ENCODE measurements at regions of chr19 and their contacts with region 1.

Region 1: DNA sequence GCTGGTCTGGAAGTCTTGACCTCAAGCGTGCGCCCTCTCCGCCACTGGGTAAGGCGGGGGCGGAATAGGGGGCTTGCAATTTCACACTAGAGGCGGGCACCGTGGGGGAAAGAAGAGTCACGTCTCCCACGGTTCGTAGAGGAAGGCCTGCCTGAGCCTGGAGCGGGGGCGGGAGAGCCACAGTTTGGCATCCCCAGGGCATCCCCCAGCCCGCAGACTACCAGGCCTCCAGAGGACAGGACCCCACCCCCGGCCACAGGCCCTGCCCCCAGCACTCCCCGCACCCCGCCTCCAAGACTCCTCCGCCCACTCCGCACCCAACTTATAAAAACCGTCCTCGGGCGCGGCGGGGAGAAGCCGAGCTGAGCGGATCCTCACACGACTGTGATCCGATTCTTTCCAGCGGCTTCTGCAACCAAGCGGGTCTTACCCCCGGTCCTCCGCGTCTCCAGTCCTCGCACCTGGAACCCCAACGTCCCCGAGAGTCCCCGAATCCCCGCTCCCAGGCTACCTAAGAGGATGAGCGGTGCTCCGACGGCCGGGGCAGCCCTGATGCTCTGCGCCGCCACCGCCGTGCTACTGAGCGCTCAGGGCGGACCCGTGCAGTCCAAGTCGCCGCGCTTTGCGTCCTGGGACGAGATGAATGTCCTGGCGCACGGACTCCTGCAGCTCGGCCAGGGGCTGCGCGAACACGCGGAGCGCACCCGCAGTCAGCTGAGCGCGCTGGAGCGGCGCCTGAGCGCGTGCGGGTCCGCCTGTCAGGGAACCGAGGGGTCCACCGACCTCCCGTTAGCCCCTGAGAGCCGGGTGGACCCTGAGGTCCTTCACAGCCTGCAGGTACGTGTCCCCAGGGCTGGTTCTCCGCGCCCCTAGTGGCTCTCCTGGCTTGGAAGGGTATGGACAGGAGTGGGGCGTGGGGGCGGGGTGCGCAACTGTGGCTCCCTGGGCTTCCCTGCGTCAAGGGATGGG is at the start of gene ANGPTL4:
- DNase-seq: peak; percentile 67 to 93 (median 84)
- ATAC-seq: peak in 3 of 4 donors; percentile 43 to 63 (median 59)
- H3K4me3 ChIP-seq: peak within 1 kb of the TSS; percentile 56 to 89 (median 74)
- H3K27ac ChIP-seq: peak within 1 kb of the TSS; percentile 61 to 98 (median 81)
- H3K4me1 ChIP-seq: peaks cover 16 to 79% (median 54%) of the 10 kb centered on the region in 12 donors
- H3K27me3 ChIP-seq: peaks cover 0 to 9% (median 0%) of the 10 kb centered on the region in 9 donors
- CTCF ChIP-seq: peak in 8 of 12 donors; percentile 8 to 45 (median 20)
- POLR2A ChIP-seq: peak in 1 of 2 donors; percentile 91
- total RNA-seq, gene ANGPTL4: 2.4 to 117 (median 10.8) TPM

Region 2: DNA sequence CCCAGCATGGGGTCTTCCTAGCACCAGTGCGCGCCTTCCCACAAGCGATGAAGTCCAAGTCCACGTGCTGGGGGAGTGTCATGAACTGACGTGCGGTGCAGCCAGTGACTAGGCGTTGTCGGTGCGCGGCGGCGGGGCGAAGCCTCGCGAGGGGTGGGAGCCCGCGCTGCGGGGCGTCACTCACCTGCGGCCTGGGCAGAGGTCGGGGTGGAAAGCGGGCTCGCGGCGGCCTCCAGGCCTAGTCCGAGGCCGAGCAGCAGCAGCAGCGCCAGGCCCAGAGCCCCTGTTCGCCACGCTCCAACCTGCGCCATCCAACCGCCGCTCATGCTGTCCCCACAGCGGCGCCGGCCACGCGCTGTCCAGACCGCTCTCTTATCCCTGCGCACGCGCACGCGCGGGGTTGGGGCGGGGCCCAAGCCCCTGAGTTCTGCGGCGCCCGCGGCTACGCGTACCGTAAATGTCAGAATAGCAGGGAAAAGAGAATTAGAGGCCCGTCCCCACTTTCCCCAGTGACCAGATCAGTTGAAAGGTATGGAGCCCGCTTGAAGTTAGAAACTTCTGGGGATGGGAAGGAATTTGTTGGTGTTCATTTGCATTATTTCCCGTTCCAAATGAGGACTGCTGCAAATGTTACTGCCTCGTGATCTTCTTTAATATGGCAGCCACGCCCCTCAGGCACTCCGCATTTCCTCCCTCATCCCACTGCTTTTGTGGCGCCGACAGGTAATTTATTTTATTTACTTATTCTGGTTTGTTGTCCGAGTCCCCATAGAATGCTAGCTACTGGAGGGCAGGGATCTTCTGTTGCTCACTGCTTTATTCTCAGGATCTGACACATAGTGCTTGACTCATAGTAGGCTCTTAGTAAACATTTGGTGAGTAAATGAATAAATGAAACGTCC is 55.9 kb before region 1 on chr19 and contains the start of gene CD320:
- intact Hi-C with region 1: no loop called
- DNase-seq: peak; percentile 88 to 94 (median 91)
- ATAC-seq: peak; percentile 88 to 95 (median 94)
- H3K4me3 ChIP-seq: peak within 1 kb of the TSS; percentile 8 to 83 (median 64)
- H3K27ac ChIP-seq: peak within 1 kb of the TSS in 11 of 12 donors; percentile 21 to 80 (median 60)
- H3K4me1 ChIP-seq: peaks cover 3 to 53% (median 31%) of the 10 kb centered on the region in 12 donors
- H3K27me3 ChIP-seq: no peaks in the 10 kb centered on the region
- CTCF ChIP-seq: no peak
- POLR2A ChIP-seq: peak in 1 of 2 donors; percentile 71
- total RNA-seq, gene CD320: 17.7 to 74.8 (median 35.7) TPM

Region 3: DNA sequence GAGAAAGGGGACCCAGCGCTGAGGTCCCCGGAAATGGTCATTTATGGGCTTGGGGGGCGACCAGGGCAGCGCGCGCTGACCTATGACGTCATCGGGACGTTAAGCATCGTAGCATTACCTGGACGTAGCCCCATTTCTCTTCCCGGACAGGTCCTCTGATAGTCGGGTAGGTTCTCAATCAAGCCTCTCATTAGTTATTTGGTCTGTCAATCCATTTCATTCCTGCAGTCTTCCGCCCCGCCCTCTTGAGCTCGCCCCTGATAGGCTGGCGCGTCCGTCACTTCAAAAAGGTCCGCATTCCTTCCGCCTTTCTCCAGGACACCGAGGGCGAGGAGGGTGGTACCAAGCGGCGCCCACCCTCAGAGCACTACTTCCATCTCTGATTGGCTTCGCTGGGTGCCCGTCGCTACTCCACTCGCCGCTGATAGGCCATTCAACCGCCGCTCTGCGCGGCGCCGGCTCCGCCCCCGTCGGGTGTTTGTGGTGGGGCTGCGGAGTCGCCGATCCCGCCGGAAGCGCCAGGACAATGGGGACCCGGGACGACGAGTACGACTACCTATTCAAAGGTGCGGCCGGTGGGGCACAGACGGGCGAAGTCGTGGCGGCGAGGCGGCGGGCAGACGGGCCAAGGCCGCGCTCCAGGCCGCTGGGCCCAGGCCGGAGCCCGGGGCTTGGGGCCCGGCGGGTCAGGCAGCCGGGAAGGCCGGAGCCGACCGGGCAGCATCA is 26.0 kb after region 1 on chr19 and contains the start of gene RAB11B:
- intact Hi-C with region 1: loop called in 9 of 10 experiments (anchors 1 to 5 kb)
- DNase-seq: peak; percentile 99 to 100 (median 99)
- ATAC-seq: peak; percentile 88 to 95 (median 92)
- H3K4me3 ChIP-seq: peak within 1 kb of the TSS; percentile 69 to 100 (median 92)
- H3K27ac ChIP-seq: peak within 1 kb of the TSS; percentile 99 to 100 (median 100)
- H3K4me1 ChIP-seq: peaks cover 14 to 57% (median 45%) of the 10 kb centered on the region in 12 donors
- H3K27me3 ChIP-seq: no peaks in the 10 kb centered on the region
- CTCF ChIP-seq: no peak
- POLR2A ChIP-seq: peak in 1 of 2 donors; percentile 77
- total RNA-seq, gene RAB11B: 56.4 to 159 (median 141) TPM

Region 4: GRCh38 chr19:8396563-8397203 is 32.6 kb after region 1 on chr19:
- intact Hi-C with region 1: loop called in 6 of 10 experiments (anchors 2 to 5 kb)
- DNase-seq: peak; percentile 49 to 89 (median 66)
- ATAC-seq: peak in 3 of 4 donors; percentile 23 to 59 (median 43)
- H3K4me3 ChIP-seq: no peak overlapping the region
- H3K27ac ChIP-seq: peak overlapping the region in 3 of 12 donors; percentile 34 to 56 (median 47)
- H3K4me1 ChIP-seq: peaks cover 14 to 69% (median 62%) of the 10 kb centered on the region in 12 donors
- H3K27me3 ChIP-seq: no peaks in the 10 kb centered on the region
- CTCF ChIP-seq: peak; percentile 44 to 73 (median 60)
- POLR2A ChIP-seq: no peak

Measured in heart left ventricle (tissue), 16 donors.